CD8-positive, alpha-beta T cell (primary cell): ENCODE measurements at regions of chr12 and their contacts with region 1.

Region 1: DNA sequence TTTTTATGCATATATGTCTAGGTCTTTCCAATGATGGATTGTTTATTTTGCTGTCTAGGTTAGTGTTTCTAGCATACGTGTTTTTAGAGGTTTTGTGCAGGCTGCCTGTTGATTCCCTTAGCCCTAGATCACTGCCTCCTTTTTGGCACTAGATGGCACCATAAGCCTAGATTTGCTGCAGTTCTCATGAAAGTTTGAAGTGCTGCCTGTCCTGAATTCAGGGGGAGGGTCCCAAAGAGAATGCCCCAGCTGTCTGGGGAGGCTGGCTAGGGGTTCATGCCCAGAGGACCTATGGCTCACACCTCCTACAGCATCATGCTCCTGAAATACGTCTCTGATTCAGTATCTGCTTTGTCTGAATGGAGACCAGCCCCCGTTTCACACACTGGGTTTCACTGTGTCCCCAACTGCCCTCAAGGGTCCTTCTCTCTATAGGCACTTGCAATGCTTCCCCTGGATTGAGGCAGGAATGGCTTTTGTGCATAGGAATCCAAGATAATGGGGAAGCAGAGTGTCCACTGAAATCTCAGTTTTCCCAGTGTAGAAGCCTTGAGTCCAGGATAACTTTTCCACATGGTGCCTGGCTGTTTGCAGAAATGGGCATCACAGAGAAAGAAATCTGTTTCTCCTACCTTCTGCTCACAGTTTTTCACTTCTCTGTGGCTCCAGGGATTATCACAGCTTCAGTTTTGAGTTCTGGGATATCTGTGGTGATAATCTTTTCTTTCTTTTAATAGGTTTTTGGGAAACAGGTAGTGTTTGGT is 14.2 kb upstream of the TXNRD1 start:
- DNase-seq: peak; percentile 7 to 80 (median 39)
- ATAC-seq: peak; percentile 57
- H3K4me3 ChIP-seq: no peak overlapping the region
- H3K4me3 Mint-ChIP-seq: no peak overlapping the region
- H3K27ac ChIP-seq: no peak overlapping the region
- H3K27ac Mint-ChIP-seq: no peak overlapping the region
- H3K4me1 ChIP-seq: no peaks in the 10 kb centered on the region
- H3K4me1 Mint-ChIP-seq: peaks cover 2% of the 10 kb centered on the region
- H3K27me3 ChIP-seq: no peaks in the 10 kb centered on the region
- H3K27me3 Mint-ChIP-seq: peaks cover 15% of the 10 kb centered on the region
- CTCF ChIP-seq: peak; percentile 87

Region 2: GRCh38 chr12:104446646-104447421 is 245.4 kb after region 1 on chr12:
- CTCF ChIA-PET with region 1: no interaction called
- POLR2A ChIA-PET with region 1: no interaction called
- intact Hi-C with region 1: no loop called
- DNase-seq: no peak
- ATAC-seq: no peak
- H3K4me3 ChIP-seq: no peak overlapping the region
- H3K4me3 Mint-ChIP-seq: no peak overlapping the region
- H3K27ac ChIP-seq: no peak overlapping the region
- H3K27ac Mint-ChIP-seq: no peak overlapping the region
- H3K4me1 ChIP-seq: no peaks in the 10 kb centered on the region
- H3K4me1 Mint-ChIP-seq: no peaks in the 10 kb centered on the region
- H3K27me3 ChIP-seq: no peaks in the 10 kb centered on the region
- H3K27me3 Mint-ChIP-seq: no peaks in the 10 kb centered on the region
- CTCF ChIP-seq: no peak

Region 3: GRCh38 chr12:104877123-104877705 is 675.8 kb after region 1 on chr12:
- CTCF ChIA-PET with region 1: interaction called, 3 read pairs
- POLR2A ChIA-PET with region 1: no interaction called
- intact Hi-C with region 1: loop called (anchors 1 to 2 kb)
- DNase-seq: peak; percentile 3 to 60 (median 31)
- ATAC-seq: no peak
- H3K4me3 ChIP-seq: no peak overlapping the region
- H3K4me3 Mint-ChIP-seq: no peak overlapping the region
- H3K27ac ChIP-seq: no peak overlapping the region
- H3K27ac Mint-ChIP-seq: no peak overlapping the region
- H3K4me1 ChIP-seq: no peaks in the 10 kb centered on the region
- H3K4me1 Mint-ChIP-seq: no peaks in the 10 kb centered on the region
- H3K27me3 ChIP-seq: no peaks in the 10 kb centered on the region
- H3K27me3 Mint-ChIP-seq: no peaks in the 10 kb centered on the region
- CTCF ChIP-seq: peak; percentile 83